Activated T-helper 2 cell treated with anti-CD3 and anti-CD28 coated beads, Interferon-gamma antibody, Interleukin-2, Interleukin-4, amounts not matched to agents 10 μg/mL and 5 μg/mL and 100 μg/mL, durations not matched to agents 14 hours and 24 hours and 36 hours (primary cell): ENCODE measurements at regions of chr9 and their contacts with region 1.

Region 1: GRCh38 chr9:3906432-3907213 is 380.8 kb upstream of the RFX3 start:
- DNase-seq: no peak
- H3K4me3 Mint-ChIP-seq: no peak overlapping the region
- H3K27ac Mint-ChIP-seq: no peak overlapping the region
- H3K4me1 Mint-ChIP-seq: peaks cover 71% of the 10 kb centered on the region
- H3K27me3 Mint-ChIP-seq: no peaks in the 10 kb centered on the region

Region 2: GRCh38 chr9:3746296-3747275 is 160.0 kb before region 1 on chr9:
- intact Hi-C with region 1: loop called (anchors 2 kb)
- DNase-seq: no peak
- H3K4me3 Mint-ChIP-seq: no peak overlapping the region
- H3K27ac Mint-ChIP-seq: peak overlapping the region; percentile 76
- H3K4me1 Mint-ChIP-seq: peaks cover 32% of the 10 kb centered on the region
- H3K27me3 Mint-ChIP-seq: no peaks in the 10 kb centered on the region

Region 3: DNA sequence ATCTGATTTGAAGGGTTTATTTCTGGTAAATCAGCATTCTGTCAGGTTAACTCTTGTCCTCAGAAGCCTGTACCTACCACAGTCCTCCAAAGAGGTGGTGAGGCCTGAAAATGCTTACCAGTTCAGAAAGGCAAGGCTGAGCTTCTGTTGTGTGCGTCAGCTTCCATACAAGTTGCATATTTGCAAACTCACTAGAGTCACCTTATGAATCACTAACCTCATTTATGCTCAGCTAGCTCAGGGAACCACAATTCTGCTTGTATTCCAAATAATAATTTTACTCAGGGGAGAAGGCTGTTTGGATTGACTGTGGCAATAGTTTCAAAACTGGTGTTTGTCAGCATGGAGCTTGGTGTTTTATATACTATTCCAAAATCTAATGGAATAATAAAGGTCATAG is 25.8 kb before region 1 on chr9:
- intact Hi-C with region 1: loop called (anchors 1 kb)
- DNase-seq: no peak
- H3K4me3 Mint-ChIP-seq: no peak overlapping the region
- H3K27ac Mint-ChIP-seq: no peak overlapping the region
- H3K4me1 Mint-ChIP-seq: peaks cover 30% of the 10 kb centered on the region
- H3K27me3 Mint-ChIP-seq: no peaks in the 10 kb centered on the region

Region 4: GRCh38 chr9:3931996-3932906 is 25.6 kb after region 1 on chr9:
- intact Hi-C with region 1: loop called (anchors 1 kb)
- DNase-seq: no peak
- H3K4me3 Mint-ChIP-seq: peak overlapping the region; percentile 51
- H3K27ac Mint-ChIP-seq: peak overlapping the region; percentile 93
- H3K4me1 Mint-ChIP-seq: peaks cover 33% of the 10 kb centered on the region
- H3K27me3 Mint-ChIP-seq: no peaks in the 10 kb centered on the region